HepG2 (cell line): ENCODE measurements at regions of chr4 and their contacts with region 1.

Region 1: GRCh38 chr4:1777822-1778641 is 15.1 kb upstream of the FGFR3 start:
- DNase-seq: peak; percentile 81
- ATAC-seq: peak; percentile 39
- H3K4me3 ChIP-seq: peak overlapping the region; percentile 36 to 67 (median 44); a peak in 5 of 6 replicates
- H3K27ac ChIP-seq: peak overlapping the region; percentile 86
- H3K4me1 ChIP-seq: peaks cover 97% of the 10 kb centered on the region
- H3K27me3 ChIP-seq: no peaks in the 10 kb centered on the region
- CTCF ChIP-seq: peak; percentile 67
- EP300 ChIP-seq: peak in 1 of 2 experiments; percentile 35; a peak in 1 of 4 replicates
- POLR2A ChIP-seq: no peak
- RAD21 ChIP-seq: no peak

Region 2: DNA sequence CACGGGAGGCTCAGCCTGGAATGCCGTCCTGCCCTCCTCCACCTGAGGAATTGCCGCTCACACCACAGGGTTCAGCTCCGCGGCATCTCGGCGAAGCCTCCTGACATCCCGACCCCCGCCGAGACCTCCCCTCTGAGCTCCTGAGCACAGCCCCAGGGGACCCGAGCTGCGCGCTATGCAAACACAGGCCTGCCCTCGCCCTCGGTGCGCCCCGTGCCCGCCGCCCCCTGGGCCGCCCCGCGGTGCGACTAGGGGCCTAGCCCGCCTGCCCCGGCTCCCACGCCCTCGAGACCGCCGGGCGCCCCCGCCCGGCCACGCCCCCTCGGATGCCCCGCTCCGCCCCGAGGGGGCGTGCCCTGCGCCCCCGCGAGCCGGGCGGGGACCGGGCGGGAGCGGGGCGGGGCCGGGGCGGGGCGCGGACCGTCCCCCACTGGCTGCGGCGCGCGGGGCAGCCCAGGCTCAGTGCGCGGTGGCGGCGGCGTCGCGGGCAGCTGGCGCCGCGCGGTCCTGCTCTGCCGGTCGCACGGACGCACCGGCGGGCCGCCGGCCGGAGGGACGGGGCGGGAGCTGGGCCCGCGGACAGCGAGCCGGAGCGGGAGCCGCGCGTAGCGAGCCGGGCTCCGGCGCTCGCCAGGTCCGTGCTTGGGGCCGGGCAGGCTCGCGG is 14.9 kb after region 1 on chr4 and contains the start of gene FGFR3:
- CTCF ChIA-PET with region 1: no interaction called
- POLR2A ChIA-PET with region 1: interaction called, 1,258 read pairs
- in situ Hi-C with region 1: no loop called
- intact Hi-C with region 1: loop called (anchors 2 kb)
- DNase-seq: peak; percentile 48
- ATAC-seq: peak; percentile 31
- H3K4me3 ChIP-seq: peak within 1 kb of the TSS; percentile 94 to 98 (median 95)
- H3K27ac ChIP-seq: peak within 1 kb of the TSS; percentile 92
- H3K4me1 ChIP-seq: peaks cover 71% of the 10 kb centered on the region
- H3K27me3 ChIP-seq: peaks cover 8 to 22% of the 10 kb centered on the region in 2 experiments; a peak in 4 of 5 replicates
- CTCF ChIP-seq: no peak
- EP300 ChIP-seq: no peak
- POLR2A ChIP-seq: peak in 1 of 2 experiments; percentile 82; a peak in 2 of 4 replicates
- RAD21 ChIP-seq: peak; percentile 30; the same call in 1 of the 2 replicates
- total RNA-seq, gene FGFR3: 40.2 and 103 TPM in 2 replicates